Activated CD4-positive, alpha-beta T cell treated with anti-CD3 and anti-CD28 coated beads for 36 hours (primary cell): ENCODE measurements at regions of chr10 and their contacts with region 1.

Region 1: GRCh38 chr10:110774069-110775019 is 97.4 kb upstream of the PDCD4 start:
- DNase-seq: peak; percentile 67
- ATAC-seq: peak; percentile 94
- H3K4me3 Mint-ChIP-seq: peak overlapping the region; percentile 18
- H3K27ac Mint-ChIP-seq: peak overlapping the region; percentile 89
- H3K4me1 Mint-ChIP-seq: peaks cover 61% of the 10 kb centered on the region
- H3K27me3 Mint-ChIP-seq: peaks cover 2% of the 10 kb centered on the region

Region 2: DNA sequence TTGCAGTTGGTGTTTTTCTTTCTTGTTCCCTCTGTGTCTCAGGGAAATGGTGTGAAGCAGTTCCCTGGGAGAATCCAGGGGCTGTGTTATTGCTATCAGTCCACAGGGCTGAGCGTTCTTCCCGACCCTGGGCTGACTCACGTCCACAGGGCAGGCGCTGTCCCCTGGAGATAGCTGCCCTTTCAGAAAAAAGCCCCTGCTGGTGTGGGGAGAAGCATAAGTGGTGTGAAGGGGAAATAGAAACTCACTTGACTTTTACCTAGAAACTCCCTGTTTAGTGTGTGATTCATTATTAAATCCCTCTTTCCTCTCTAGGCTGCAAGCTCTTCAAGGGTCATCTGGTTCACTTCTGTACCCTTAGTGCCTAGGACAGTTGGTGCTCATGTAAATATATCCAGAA is 406.3 kb before region 1 on chr10:
- CTCF ChIA-PET with region 1: no interaction called
- POLR2A ChIA-PET with region 1: no interaction called
- intact Hi-C with region 1: loop called in 1 of 2 experiments (anchors 5 kb)
- DNase-seq: peak; percentile 27
- ATAC-seq: no peak
- H3K4me3 Mint-ChIP-seq: no peak overlapping the region
- H3K27ac Mint-ChIP-seq: no peak overlapping the region
- H3K4me1 Mint-ChIP-seq: peaks cover 70% of the 10 kb centered on the region
- H3K27me3 Mint-ChIP-seq: no peaks in the 10 kb centered on the region

Region 3: DNA sequence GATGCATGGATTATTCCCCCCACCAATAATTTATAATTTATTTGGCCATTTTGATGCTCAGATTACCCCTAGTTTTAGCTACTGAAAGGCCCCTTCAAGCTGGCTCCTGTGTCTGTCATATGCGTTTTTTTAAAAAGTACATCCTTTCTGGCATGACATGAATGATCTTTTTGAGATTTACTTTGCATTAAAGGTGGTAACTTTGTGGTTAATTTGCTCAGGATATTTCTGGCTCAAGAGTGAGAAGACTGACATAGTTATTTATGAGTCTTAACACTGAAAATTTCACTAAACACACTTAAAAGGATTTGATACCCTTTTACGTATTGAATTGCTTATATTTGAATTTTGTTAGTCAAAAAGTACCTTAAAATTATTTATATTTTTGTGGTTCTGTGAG is 201.5 kb before region 1 on chr10:
- CTCF ChIA-PET with region 1: no interaction called
- POLR2A ChIA-PET with region 1: no interaction called
- intact Hi-C with region 1: no loop called
- DNase-seq: no peak
- ATAC-seq: no peak
- H3K4me3 Mint-ChIP-seq: no peak overlapping the region
- H3K27ac Mint-ChIP-seq: no peak overlapping the region
- H3K4me1 Mint-ChIP-seq: peaks cover 61% of the 10 kb centered on the region
- H3K27me3 Mint-ChIP-seq: no peaks in the 10 kb centered on the region

Region 4: GRCh38 chr10:110756876-110757275 is 17.5 kb before region 1 on chr10:
- CTCF ChIA-PET with region 1: interaction called, 3 read pairs
- POLR2A ChIA-PET with region 1: interaction called, 4 read pairs
- intact Hi-C with region 1: loop called in 1 of 2 experiments (anchors 1 kb)
- DNase-seq: no peak
- ATAC-seq: no peak
- H3K4me3 Mint-ChIP-seq: no peak overlapping the region
- H3K27ac Mint-ChIP-seq: no peak overlapping the region
- H3K4me1 Mint-ChIP-seq: peaks cover 24% of the 10 kb centered on the region
- H3K27me3 Mint-ChIP-seq: no peaks in the 10 kb centered on the region

Region 5: GRCh38 chr10:110871298-110872084 is 97.1 kb after region 1 on chr10 and contains the start of gene PDCD4:
- CTCF ChIA-PET with region 1: no interaction called
- POLR2A ChIA-PET with region 1: interaction called, 5 read pairs
- intact Hi-C with region 1: loop called in 1 of 2 experiments (anchors 1 kb)
- DNase-seq: peak; percentile 97
- ATAC-seq: peak; percentile 85
- H3K4me3 Mint-ChIP-seq: peak within 1 kb of the TSS; percentile 87
- H3K27ac Mint-ChIP-seq: peak within 1 kb of the TSS; percentile 95
- H3K4me1 Mint-ChIP-seq: peaks cover 63% of the 10 kb centered on the region
- H3K27me3 Mint-ChIP-seq: no peaks in the 10 kb centered on the region
- total RNA-seq, gene PDCD4: 69.8 to 125 TPM

Region 6: DNA sequence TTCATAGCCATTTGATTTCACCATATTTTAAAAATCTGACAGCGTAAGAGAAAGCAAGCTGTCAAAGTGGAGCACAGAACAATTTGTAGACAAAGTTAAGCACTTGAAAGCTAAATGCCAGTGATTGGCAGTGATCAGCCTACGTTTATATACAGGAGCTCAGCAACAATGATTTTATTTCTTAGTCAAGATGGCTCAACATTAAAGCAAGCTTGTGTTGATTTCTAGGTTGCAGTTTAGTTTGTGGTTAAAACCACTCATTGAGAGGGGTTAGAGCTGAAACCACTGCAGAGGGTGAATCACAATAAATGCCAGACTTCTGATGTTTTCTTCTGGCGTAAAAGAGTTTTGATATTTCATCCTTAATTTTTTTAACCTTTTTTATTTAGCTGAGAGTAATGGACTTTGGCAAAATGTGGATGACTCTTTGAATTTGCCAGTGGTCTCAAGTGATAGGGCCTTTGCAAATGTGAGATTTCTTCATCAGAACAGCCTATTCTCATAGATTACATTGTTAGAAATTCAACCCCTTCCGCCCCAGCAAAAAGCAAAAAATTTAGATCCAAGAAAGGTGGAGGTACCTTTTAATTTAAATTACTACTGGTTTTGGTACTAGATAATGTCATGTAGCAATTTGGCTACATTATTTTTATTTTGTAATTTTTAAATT is 218.8 kb after region 1 on chr10:
- CTCF ChIA-PET with region 1: interaction called, 3 read pairs
- POLR2A ChIA-PET with region 1: no interaction called
- intact Hi-C with region 1: loop called in 1 of 2 experiments (anchors 1 kb)
- DNase-seq: peak; percentile 24
- ATAC-seq: peak; percentile 97
- H3K4me3 Mint-ChIP-seq: peak overlapping the region; percentile 47
- H3K27ac Mint-ChIP-seq: peak overlapping the region; percentile 13
- H3K4me1 Mint-ChIP-seq: peaks cover 45% of the 10 kb centered on the region
- H3K27me3 Mint-ChIP-seq: no peaks in the 10 kb centered on the region